IMR-90 (cell line): ENCODE measurements at regions of chr9 and their contacts with region 1.

Region 1: GRCh38 chr9:37966412-37967271 is 62.7 kb upstream of the SLC25A51 start:
- DNase-seq: peak; percentile 55
- ATAC-seq: no peak
- H3K4me3 ChIP-seq: no peak overlapping the region
- H3K27ac ChIP-seq: peak overlapping the region; percentile 33; the same call in 1 of the 2 replicates
- H3K4me1 ChIP-seq: peaks cover 51% of the 10 kb centered on the region
- H3K27me3 ChIP-seq: no peaks in the 10 kb centered on the region
- CTCF ChIP-seq: no peak
- POLR2A ChIP-seq: no peak
- RAD21 ChIP-seq: no peak

Region 2: GRCh38 chr9:38008168-38009034 is 41.8 kb after region 1 on chr9:
- CTCF ChIA-PET with region 1: no interaction called
- POLR2A ChIA-PET with region 1: no interaction called
- dilution Hi-C with region 1: no loop called
- in situ Hi-C with region 1: no loop called
- intact Hi-C with region 1: loop called (anchors 5 kb)
- DNase-seq: peak; percentile 93
- ATAC-seq: peak; percentile 80
- H3K4me3 ChIP-seq: no peak overlapping the region
- H3K27ac ChIP-seq: peak overlapping the region; percentile 85
- H3K4me1 ChIP-seq: peaks cover 40% of the 10 kb centered on the region
- H3K27me3 ChIP-seq: no peaks in the 10 kb centered on the region
- CTCF ChIP-seq: no peak
- POLR2A ChIP-seq: no peak
- RAD21 ChIP-seq: peak; percentile 27

Region 3: GRCh38 chr9:38178237-38178636 is 211.6 kb after region 1 on chr9:
- CTCF ChIA-PET with region 1: no interaction called
- POLR2A ChIA-PET with region 1: no interaction called
- dilution Hi-C with region 1: no loop called
- in situ Hi-C with region 1: no loop called
- intact Hi-C with region 1: no loop called
- DNase-seq: no peak
- ATAC-seq: no peak
- H3K4me3 ChIP-seq: no peak overlapping the region
- H3K27ac ChIP-seq: no peak overlapping the region
- H3K4me1 ChIP-seq: no peaks in the 10 kb centered on the region
- H3K27me3 ChIP-seq: peaks cover 11% of the 10 kb centered on the region
- CTCF ChIP-seq: no peak
- POLR2A ChIP-seq: no peak
- RAD21 ChIP-seq: no peak